GM23248 (cell line): ENCODE measurements at regions of chr18 and their contacts with region 1.

Region 1: DNA sequence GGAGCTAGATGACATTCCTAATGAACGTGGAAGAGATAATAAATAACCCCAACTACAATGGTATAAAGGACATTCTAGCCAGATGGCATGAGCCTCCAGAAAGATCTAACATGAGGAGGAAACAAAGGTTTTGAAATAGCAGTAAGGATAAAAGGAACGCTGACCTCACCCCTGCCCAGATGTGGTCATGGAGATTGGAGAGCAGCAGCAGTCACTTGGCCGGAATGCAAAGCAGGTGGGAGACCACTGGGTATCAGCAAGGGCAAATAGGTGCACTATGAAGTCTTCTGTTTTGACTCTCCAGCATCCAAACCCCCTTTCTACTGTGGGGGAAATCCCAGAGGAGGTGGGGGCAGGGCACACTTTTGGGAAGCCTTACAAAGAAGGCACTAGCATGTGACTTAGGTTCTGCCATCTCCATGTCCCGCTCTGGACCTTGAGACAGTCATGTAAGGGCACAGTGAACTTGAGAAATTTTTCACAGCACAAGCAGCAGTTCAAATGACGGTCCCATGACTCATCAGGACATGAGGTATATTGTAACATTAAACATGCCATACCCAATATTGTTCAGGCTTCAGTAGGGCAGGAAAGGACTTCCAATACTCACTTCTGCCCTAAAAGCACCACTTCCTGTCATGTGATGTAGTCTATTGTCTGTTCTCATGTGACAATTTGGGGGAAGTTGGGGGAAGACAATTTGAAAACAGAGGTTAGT is 55.2 kb downstream of the METTL4 start:
- DNase-seq: peak; percentile 95
- H3K4me3 ChIP-seq: peak overlapping the region; percentile 13
- H3K27ac ChIP-seq: peak overlapping the region; percentile 88
- H3K4me1 ChIP-seq: peaks cover 24% of the 10 kb centered on the region
- H3K27me3 ChIP-seq: no peaks in the 10 kb centered on the region

Region 2: DNA sequence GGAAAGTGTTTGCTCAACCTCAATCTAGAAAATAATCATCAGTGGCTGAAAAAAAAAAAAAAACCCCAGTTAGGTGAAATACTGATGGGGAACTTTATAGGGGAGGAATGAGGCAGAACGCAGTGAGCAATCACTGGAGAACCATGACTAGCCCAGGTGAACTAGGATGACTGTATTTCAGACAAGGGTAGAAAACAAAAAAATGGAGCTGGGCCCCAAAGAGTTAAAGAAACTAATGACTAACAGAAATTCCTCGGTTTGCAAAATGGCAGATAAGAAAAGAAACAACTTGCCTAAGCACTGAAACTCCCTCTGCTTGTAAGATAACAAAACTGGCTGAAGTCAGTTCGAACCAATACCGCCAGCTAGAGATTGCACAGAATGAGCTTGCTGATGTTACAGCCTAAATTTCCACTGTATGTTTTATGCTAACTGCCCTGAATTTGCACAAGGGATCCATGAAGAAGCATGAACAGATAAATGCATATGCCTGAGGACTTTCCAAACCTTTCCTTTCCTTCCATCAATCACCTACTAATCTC is 190.7 kb before region 1 on chr18:
- in situ Hi-C with region 1: no loop called
- DNase-seq: no peak
- H3K4me3 ChIP-seq: no peak overlapping the region
- H3K27ac ChIP-seq: no peak overlapping the region
- H3K4me1 ChIP-seq: no peaks in the 10 kb centered on the region
- H3K27me3 ChIP-seq: peaks cover 22% of the 10 kb centered on the region

Region 3: GRCh38 chr18:2411381-2411960 is 104.6 kb before region 1 on chr18:
- in situ Hi-C with region 1: loop called (anchors 25 kb)
- DNase-seq: peak; percentile 75
- H3K4me3 ChIP-seq: 0 out of 2 replicates have a peak overlapping the region, but pooled peaks have one; percentile 3
- H3K27ac ChIP-seq: peak overlapping the region; percentile 13; the same call in 1 of the 2 replicates
- H3K4me1 ChIP-seq: peaks cover 22% of the 10 kb centered on the region
- H3K27me3 ChIP-seq: no peaks in the 10 kb centered on the region

Region 4: DNA sequence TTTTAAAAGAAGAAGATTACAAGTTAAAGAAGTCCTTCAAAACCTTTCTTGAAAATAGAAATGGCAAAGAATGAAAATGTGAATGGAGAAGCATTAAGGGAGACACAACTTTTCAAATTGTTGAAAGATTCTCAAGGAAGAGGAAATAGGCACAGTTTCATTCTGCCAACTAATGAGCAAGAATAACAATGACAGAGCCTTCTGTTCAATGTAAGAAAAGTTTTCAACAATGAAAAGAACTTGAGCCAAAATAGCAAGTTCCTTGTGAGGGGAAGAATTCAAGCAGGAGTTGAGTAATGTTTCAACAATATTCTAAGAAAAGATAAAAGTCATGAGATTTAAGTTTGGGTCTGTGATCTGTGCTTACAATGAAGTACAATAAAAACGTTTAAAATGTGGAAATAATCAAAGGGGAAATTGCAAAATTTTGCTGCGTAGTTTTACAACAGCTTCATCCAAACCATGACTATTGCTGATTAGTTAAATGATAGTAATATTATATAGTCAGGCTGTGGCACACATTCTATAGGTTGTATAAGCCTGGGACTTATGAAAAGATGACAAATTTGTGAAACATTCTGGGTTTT is 67.4 kb before region 1 on chr18:
- in situ Hi-C with region 1: no loop called
- DNase-seq: peak; percentile 40
- H3K4me3 ChIP-seq: no peak overlapping the region
- H3K27ac ChIP-seq: peak overlapping the region; percentile 36
- H3K4me1 ChIP-seq: peaks cover 14% of the 10 kb centered on the region
- H3K27me3 ChIP-seq: no peaks in the 10 kb centered on the region